Right lobe of liver (tissue), 6 donors: ENCODE measurements at regions of chr9 and their contacts with region 1.

Region 1: GRCh38 chr9:15104826-15105420 is 194.7 kb upstream of the FREM1 start:
- DNase-seq: peak in 1 of 3 donors; percentile 44
- ATAC-seq: peak; percentile 84 to 88 (median 85)
- H3K4me3 ChIP-seq: no peak overlapping the region
- H3K27ac ChIP-seq: no peak overlapping the region
- H3K4me1 ChIP-seq: no peaks in the 10 kb centered on the region
- H3K27me3 ChIP-seq: no peaks in the 10 kb centered on the region
- CTCF ChIP-seq: peak; percentile 65 to 72 (median 68)
- POLR2A ChIP-seq: no peak

Region 2: DNA sequence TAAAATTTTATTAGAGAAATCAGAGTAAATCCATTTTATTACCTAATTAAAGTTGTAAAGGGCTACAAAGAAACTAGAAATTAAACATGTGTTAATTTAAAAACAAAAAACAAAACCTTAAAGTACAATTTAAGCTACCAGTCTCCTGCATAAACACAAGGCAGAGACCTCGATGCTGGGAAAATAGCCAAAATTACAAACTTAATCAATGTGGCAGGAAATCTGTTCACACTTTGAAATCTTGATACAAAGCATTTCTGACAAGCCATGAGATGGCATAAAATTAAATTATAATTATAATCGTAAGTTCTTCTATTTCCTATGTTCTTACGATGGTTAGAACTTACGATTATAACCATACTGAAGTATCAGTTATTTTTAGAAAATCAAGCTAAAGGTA is 36.7 kb before region 1 on chr9:
- intact Hi-C with region 1: no loop called
- DNase-seq: no peak
- ATAC-seq: no peak
- H3K4me3 ChIP-seq: no peak overlapping the region
- H3K27ac ChIP-seq: no peak overlapping the region
- H3K4me1 ChIP-seq: no peaks in the 10 kb centered on the region
- H3K27me3 ChIP-seq: no peaks in the 10 kb centered on the region
- CTCF ChIP-seq: no peak
- POLR2A ChIP-seq: no peak

Region 3: DNA sequence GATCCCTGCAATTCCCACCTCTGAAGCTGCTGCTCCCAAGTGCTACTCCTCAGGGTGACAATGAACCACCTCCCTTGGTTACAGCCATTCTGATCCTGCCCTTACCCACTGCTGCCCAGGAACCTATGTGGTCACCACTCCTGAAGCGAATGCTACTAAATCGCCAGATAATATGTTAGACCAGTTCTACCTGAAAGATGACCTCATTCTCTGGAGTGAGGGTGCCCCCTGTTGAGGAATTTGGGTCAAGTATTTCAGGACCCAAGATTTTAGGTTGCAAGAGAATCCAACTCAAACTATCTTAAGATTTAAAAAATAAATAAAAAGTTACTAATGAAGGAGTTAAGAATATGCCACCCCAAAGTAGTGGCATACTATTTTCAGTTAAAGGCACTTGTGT is 312.0 kb after region 1 on chr9:
- intact Hi-C with region 1: loop called in 1 of 2 experiments (anchors 10 kb)
- DNase-seq: peak in 1 of 3 donors; percentile 52
- ATAC-seq: peak; percentile 84 to 94 (median 89)
- H3K4me3 ChIP-seq: no peak overlapping the region
- H3K27ac ChIP-seq: no peak overlapping the region
- H3K4me1 ChIP-seq: no peaks in the 10 kb centered on the region
- H3K27me3 ChIP-seq: no peaks in the 10 kb centered on the region
- CTCF ChIP-seq: peak; percentile 39 to 58 (median 48)
- POLR2A ChIP-seq: no peak